GM13976 (cell line): ENCODE measurements at regions of chr13 and their contacts with region 1.

Region 1: GRCh38 chr13:19673473-19674430 is 40.3 kb downstream of the MPHOSPH8 start:
- DNase-seq: no peak
- CTCF ChIP-seq: no peak

Region 2: GRCh38 chr13:19737844-19738557 is 64.2 kb after region 1 on chr13:
- in situ Hi-C with region 1: loop called (anchors 10 kb)
- DNase-seq: no peak
- CTCF ChIP-seq: no peak